ENCODE measurements at regions of chr21 and their contacts with region 1.

Region 1: GRCh38 chr21:38733973-38734546 is 71.7 kb upstream of the ETS2 start:
- DNase-seq: peak; percentile 46
- H3K4me3 ChIP-seq: no peak overlapping the region
- H3K27ac ChIP-seq: no peak overlapping the region
- H3K4me1 ChIP-seq: peaks cover 15% of the 10 kb centered on the region
- H3K27me3 ChIP-seq: no peaks in the 10 kb centered on the region
- CTCF ChIP-seq: peak; percentile 94 to 97

Region 2: DNA sequence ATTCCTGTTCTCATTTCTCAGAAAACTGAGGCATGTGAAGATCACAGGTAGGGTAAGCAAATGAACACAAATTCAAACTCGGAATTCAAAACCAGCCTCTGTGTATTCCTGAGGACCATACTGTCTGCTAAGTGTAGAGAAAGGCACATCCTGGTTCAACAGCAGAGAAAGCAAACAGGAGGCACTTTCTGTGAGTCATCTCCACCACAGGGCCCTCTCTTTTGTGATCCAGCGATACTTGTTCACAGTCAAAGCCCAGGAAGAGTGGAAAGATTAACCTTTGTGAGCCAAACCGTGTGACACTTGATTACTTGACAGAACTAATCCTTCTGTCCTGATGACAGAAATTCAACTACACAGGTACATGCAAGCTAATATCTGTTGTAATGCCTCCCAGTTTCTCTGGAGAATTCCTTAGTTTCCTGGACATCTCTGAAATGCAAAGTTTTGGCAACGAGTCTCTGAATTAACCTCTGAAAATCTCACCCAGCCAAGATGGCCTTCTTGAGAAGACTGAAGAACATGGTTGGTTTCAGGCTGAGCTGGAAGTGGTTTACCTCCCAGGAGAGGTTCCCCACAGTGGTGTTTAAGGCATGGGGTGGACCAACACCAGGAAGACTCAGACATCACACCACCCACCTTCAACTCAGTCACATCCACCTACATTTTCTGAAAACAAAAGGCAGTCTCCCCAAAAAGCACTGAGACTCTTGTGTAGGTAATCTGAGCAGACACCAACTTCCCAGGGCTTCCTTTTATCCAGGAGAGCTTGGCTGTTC is 137.6 kb before region 1 on chr21:
- CTCF ChIA-PET with region 1: no interaction called
- dilution Hi-C with region 1: no loop called
- in situ Hi-C with region 1: no loop called
- intact Hi-C with region 1: no loop called
- DNase-seq: peak; percentile 43
- H3K4me3 ChIP-seq: no peak overlapping the region
- H3K27ac ChIP-seq: no peak overlapping the region
- H3K4me1 ChIP-seq: no peaks in the 10 kb centered on the region
- H3K27me3 ChIP-seq: no peaks in the 10 kb centered on the region
- CTCF ChIP-seq: no peak

Region 3: GRCh38 chr21:38825269-38825668 is 91.2 kb after region 1 on chr21:
- CTCF ChIA-PET with region 1: no interaction called
- dilution Hi-C with region 1: loop called (anchors 5 kb)
- in situ Hi-C with region 1: no loop called
- intact Hi-C with region 1: no loop called
- DNase-seq: no peak
- H3K4me3 ChIP-seq: no peak overlapping the region
- H3K27ac ChIP-seq: no peak overlapping the region
- H3K4me1 ChIP-seq: peaks cover 5% of the 10 kb centered on the region
- H3K27me3 ChIP-seq: no peaks in the 10 kb centered on the region
- CTCF ChIP-seq: no peak

Region 4: GRCh38 chr21:38913120-38913892 is 179.2 kb after region 1 on chr21:
- CTCF ChIA-PET with region 1: no interaction called
- dilution Hi-C with region 1: no loop called
- in situ Hi-C with region 1: loop called in 1 of 2 experiments (anchors 10 kb)
- intact Hi-C with region 1: loop called (anchors 5 kb)
- DNase-seq: peak; percentile 87
- H3K4me3 ChIP-seq: no peak overlapping the region
- H3K27ac ChIP-seq: peak overlapping the region; percentile 71
- H3K4me1 ChIP-seq: peaks cover 49% of the 10 kb centered on the region
- H3K27me3 ChIP-seq: no peaks in the 10 kb centered on the region
- CTCF ChIP-seq: no peak

Region 5: GRCh38 chr21:39125752-39126485 is 391.9 kb after region 1 on chr21:
- CTCF ChIA-PET with region 1: no interaction called
- dilution Hi-C with region 1: no loop called
- in situ Hi-C with region 1: no loop called
- intact Hi-C with region 1: loop called (anchors 1 kb)
- DNase-seq: peak; percentile 62
- H3K4me3 ChIP-seq: no peak overlapping the region
- H3K27ac ChIP-seq: no peak overlapping the region
- H3K4me1 ChIP-seq: no peaks in the 10 kb centered on the region
- H3K27me3 ChIP-seq: no peaks in the 10 kb centered on the region
- CTCF ChIP-seq: peak; percentile 54 to 79

Measured in mammary epithelial cell (primary cell).